CD14-positive monocyte (primary cell): ENCODE measurements at regions of chr1 and their contacts with region 1.

Region 1: GRCh38 chr1:227999056-227999930 is 7.5 kb upstream of the WNT3A start:
- DNase-seq: peak; percentile 63 to 70 (median 69)
- H3K4me3 ChIP-seq: no peak overlapping the region
- H3K4me3 Mint-ChIP-seq: no peak overlapping the region
- H3K27ac ChIP-seq: no peak overlapping the region
- H3K27ac Mint-ChIP-seq: no peak overlapping the region
- H3K4me1 ChIP-seq: no peaks in the 10 kb centered on the region
- H3K4me1 Mint-ChIP-seq: no peaks in the 10 kb centered on the region
- H3K27me3 ChIP-seq: peaks cover 0 to 5% of the 10 kb centered on the region in 2 donors
- H3K27me3 Mint-ChIP-seq: peaks cover 11 to 27% (median 16%) of the 10 kb centered on the region in 3 donors
- CTCF ChIP-seq: peak; percentile 86

Region 2: DNA sequence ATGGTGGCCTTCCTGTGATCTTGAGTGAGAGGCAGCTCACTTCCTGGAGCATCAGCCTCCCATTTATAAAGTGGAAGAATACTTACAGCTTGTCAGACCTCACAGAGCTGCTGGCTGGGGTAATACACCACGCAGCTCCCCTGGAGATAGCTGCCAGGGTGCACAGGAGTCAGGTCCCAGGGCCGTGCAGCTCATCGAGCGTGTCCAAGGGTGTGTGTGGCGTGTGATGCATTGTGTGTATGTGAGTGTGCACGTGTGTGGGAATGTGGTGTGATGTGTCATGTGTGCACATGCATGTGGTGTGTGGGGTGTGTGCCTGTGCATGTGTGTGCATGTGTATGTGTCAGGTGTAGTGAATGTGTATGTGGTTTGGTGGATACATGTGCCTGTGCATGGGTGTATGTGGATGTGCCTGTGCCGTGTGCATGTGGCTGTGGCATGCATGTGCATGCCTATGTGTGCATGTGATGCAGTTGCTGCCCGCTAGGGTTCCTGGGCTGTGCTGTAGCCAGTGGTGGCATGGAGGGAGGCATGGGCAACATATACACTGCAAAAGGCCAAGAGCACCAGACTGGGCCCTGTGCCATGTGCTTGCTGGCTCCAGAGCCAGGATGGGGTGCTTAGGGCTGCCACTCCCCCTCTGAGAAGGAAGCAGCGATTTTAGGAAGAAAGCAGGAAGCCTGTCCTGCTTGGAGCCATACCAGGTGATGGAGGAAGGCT is 32.1 kb after region 1 on chr1:
- intact Hi-C with region 1: no loop called
- DNase-seq: no peak
- H3K4me3 ChIP-seq: no peak overlapping the region
- H3K4me3 Mint-ChIP-seq: no peak overlapping the region
- H3K27ac ChIP-seq: no peak overlapping the region
- H3K27ac Mint-ChIP-seq: no peak overlapping the region
- H3K4me1 ChIP-seq: no peaks in the 10 kb centered on the region
- H3K4me1 Mint-ChIP-seq: no peaks in the 10 kb centered on the region
- H3K27me3 ChIP-seq: peaks cover 0 to 12% of the 10 kb centered on the region in 2 donors
- H3K27me3 Mint-ChIP-seq: peaks cover 5 to 19% (median 10%) of the 10 kb centered on the region in 3 donors
- CTCF ChIP-seq: no peak

Region 3: GRCh38 chr1:228510101-228510802 is 511.0 kb after region 1 on chr1:
- intact Hi-C with region 1: loop called in 1 of 2 experiments (anchors 5 kb)
- DNase-seq: no peak
- H3K4me3 ChIP-seq: no peak overlapping the region
- H3K4me3 Mint-ChIP-seq: no peak overlapping the region
- H3K27ac ChIP-seq: no peak overlapping the region
- H3K27ac Mint-ChIP-seq: peak overlapping the region in 1 of 7 donors; percentile 44
- H3K4me1 ChIP-seq: no peaks in the 10 kb centered on the region
- H3K4me1 Mint-ChIP-seq: peaks cover 7% of the 10 kb centered on the region
- H3K27me3 ChIP-seq: peaks cover 0 to 9% of the 10 kb centered on the region in 2 donors
- H3K27me3 Mint-ChIP-seq: peaks cover 22 to 48% (median 39%) of the 10 kb centered on the region in 3 donors
- CTCF ChIP-seq: no peak